ENCODE measurements at regions of chr1 and their contacts with region 1.

Region 1: DNA sequence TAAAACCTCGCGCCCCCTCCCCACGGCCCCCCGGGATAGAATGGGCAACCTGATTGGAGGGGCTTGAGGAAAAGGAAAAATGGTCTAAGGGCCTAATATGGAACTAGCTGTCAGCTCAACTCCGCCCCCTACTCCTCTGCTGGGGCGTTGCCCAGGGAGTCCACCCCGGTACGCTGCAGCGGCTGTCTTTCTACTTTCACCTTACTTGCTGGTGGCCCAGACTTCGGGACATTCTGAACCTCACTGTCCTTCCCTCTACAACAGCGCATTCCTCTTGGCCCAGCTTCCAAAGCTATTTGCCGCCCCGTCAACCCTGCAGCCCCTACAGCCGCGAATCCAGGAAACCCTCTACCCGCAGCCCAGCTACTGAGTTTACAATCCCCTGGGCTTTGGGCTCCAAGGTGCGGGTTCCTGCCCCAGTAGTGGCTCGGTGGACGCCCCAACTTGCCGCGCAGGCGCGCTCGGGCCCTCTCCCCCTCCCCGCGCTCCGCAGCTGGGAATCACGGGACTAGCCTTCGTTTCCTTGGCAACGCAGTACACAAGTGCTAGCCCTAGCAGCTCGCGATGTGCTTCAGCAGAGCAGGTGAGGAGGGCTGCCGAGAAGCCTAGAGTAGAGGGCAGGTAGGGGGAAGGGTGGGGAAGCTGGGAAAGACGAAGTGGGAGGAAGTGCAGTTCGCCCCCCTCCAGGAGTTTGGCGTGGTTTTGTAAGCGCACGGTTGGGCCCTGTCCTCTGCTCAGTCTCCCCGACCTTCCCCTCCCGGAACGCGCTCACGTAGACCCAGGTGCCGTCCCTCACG is 55.6 kb downstream of the CHIA start:
- DNase-seq: peak; percentile 95

Region 2: DNA sequence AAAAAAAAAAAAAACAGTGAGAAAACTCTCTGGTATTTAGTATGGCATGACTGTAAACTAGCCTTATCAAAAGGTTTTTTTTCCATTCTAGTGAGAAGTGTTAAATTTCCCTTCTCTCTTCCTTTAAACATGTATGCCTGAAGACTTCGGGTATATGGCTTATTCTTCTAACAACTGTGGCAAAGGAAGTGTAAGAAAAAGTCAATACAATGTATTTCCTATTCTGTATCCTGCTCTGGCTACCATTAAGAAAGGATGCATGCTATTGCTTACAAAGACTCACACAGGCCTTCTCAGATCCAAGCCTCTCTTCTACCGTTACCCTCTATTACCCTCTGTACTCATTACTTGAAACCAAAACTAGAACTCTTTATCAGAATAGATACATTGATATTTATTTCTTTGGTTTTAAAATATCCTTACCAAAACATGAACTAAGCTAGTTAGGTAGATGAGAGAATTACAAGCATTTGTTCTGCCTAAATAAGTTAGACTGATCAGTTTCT is 197.9 kb before region 1 on chr1:
- intact Hi-C with region 1: loop called in 1 of 2 experiments (anchors 5 kb)
- DNase-seq: no peak

Region 3: DNA sequence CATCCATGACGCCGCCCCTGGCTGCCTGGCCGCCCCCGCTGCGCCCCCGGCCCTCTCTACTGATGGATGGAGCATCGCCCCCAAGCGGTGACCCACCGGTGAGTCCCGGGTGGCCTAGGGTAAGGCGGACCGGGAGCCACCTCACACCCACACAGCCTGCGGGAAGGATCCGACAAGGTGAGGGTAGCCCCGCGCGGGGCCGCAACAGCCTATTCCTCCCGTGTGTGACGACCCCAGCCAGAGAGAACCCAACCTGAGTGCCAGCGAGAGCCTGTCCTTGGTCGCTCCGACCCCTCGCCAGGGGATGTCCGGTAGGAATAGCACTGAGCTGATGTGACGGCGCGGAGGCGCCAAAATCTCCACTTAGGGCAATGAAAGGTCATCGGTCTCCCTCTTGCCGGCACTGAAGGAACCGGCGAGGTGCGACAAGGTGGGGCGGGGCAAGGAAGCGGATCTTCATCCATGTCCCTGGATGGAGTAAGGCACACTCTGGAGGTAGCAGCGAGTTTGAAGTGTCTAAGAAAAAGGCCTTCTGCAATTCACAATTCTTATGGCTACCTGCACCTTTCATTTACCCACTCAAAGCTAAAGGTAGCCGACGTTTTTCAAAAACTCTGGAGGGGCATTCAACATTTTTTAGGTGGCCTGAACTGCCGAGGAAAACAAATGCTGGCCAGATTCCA is 75.4 kb before region 1 on chr1:
- intact Hi-C with region 1: no loop called
- DNase-seq: no peak

Measured in posterior vena cava (tissue), 2 donors.